T-cell (primary cell): ENCODE measurements at regions of chr1 and their contacts with region 1.

Region 1: GRCh38 chr1:2194898-2195673 is 514 bp upstream of the FAAP20 start:
- DNase-seq: peak; percentile 76 to 94 (median 85)
- ATAC-seq: peak; percentile 80 to 84 (median 82)
- H3K4me3 ChIP-seq: peak overlapping the region; percentile 57 to 61
- H3K4me3 Mint-ChIP-seq: peak overlapping the region; percentile 79 to 82 (median 81)
- H3K27ac ChIP-seq: peak overlapping the region; percentile 87
- H3K27ac Mint-ChIP-seq: peak overlapping the region; percentile 86 to 91
- H3K4me1 ChIP-seq: peaks cover 13 to 77% of the 10 kb centered on the region in 2 experiments
- H3K4me1 Mint-ChIP-seq: peaks cover 28 to 39% (median 38%) of the 10 kb centered on the region in 3 donors
- H3K27me3 ChIP-seq: no peaks in the 10 kb centered on the region
- H3K27me3 Mint-ChIP-seq: no peaks in the 10 kb centered on the region

Region 2: DNA sequence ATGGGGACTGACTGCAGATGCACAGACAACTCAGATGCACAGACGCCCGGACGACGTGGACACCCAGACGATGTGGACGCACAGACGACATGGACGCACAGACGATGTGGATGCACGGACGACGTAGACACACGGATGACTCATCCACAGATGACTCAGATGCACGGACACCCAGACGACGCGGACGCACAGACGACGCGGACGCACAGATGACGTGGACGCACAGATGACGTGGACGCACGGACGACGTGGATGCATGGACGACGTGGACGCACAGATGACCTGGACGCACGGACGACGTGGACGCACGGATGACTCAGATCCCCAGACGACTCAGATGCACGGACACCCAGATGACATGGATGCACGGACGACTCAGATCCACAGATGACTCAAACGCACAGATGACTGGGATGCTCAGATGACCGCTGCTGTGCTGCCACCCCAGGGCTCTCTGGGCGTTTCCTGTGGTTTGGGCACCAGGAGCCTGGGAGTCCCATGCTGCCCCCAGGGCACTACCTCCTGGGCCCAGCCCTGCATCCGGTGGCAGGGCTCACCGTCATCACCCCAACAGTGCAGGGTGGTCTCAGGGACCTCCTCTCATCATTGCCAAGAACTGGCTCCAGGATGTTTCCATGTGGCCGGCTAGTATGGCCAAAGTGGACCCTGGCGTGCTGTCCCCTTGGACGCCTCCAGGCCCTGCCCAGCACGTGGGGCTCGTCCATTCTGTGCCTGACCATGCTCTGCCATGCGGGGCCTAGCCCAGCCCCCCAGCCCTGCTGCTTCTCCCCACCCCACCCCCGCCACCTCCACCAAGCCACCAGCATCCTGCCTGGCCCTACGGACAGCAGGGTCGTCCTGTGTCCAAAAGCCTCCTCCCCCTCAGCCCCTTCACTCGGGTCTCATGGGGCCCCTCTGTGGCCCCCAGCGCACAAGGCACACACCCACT is 14.5 kb before region 1 on chr1:
- CTCF ChIA-PET with region 1: no interaction called
- POLR2A ChIA-PET with region 1: no interaction called
- DNase-seq: no peak
- ATAC-seq: no peak
- H3K4me3 ChIP-seq: no peak overlapping the region
- H3K4me3 Mint-ChIP-seq: no peak overlapping the region
- H3K27ac ChIP-seq: no peak overlapping the region
- H3K27ac Mint-ChIP-seq: no peak overlapping the region
- H3K4me1 ChIP-seq: no peaks in the 10 kb centered on the region
- H3K4me1 Mint-ChIP-seq: peaks cover 0 to 7% (median 1%) of the 10 kb centered on the region in 3 donors
- H3K27me3 ChIP-seq: peaks cover 0 to 1% of the 10 kb centered on the region in 2 experiments
- H3K27me3 Mint-ChIP-seq: no peaks in the 10 kb centered on the region

Region 3: GRCh38 chr1:2233997-2234761 is 39.1 kb after region 1 on chr1:
- CTCF ChIA-PET with region 1: interaction called in 1 of 2 experiments, 6 read pairs
- POLR2A ChIA-PET with region 1: interaction called, 4 to 11 read pairs
- DNase-seq: peak; percentile 58 to 88 (median 80)
- ATAC-seq: peak; percentile 52 to 75 (median 74)
- H3K4me3 ChIP-seq: peak overlapping the region; percentile 65 to 84
- H3K4me3 Mint-ChIP-seq: peak overlapping the region; percentile 84 to 96 (median 96)
- H3K27ac ChIP-seq: peak overlapping the region; percentile 73
- H3K27ac Mint-ChIP-seq: peak overlapping the region; percentile 98 to 99
- H3K4me1 ChIP-seq: peaks cover 48 to 100% of the 10 kb centered on the region in 2 experiments
- H3K4me1 Mint-ChIP-seq: peaks cover 70 to 83% (median 75%) of the 10 kb centered on the region in 3 donors
- H3K27me3 ChIP-seq: no peaks in the 10 kb centered on the region
- H3K27me3 Mint-ChIP-seq: no peaks in the 10 kb centered on the region

Region 4: DNA sequence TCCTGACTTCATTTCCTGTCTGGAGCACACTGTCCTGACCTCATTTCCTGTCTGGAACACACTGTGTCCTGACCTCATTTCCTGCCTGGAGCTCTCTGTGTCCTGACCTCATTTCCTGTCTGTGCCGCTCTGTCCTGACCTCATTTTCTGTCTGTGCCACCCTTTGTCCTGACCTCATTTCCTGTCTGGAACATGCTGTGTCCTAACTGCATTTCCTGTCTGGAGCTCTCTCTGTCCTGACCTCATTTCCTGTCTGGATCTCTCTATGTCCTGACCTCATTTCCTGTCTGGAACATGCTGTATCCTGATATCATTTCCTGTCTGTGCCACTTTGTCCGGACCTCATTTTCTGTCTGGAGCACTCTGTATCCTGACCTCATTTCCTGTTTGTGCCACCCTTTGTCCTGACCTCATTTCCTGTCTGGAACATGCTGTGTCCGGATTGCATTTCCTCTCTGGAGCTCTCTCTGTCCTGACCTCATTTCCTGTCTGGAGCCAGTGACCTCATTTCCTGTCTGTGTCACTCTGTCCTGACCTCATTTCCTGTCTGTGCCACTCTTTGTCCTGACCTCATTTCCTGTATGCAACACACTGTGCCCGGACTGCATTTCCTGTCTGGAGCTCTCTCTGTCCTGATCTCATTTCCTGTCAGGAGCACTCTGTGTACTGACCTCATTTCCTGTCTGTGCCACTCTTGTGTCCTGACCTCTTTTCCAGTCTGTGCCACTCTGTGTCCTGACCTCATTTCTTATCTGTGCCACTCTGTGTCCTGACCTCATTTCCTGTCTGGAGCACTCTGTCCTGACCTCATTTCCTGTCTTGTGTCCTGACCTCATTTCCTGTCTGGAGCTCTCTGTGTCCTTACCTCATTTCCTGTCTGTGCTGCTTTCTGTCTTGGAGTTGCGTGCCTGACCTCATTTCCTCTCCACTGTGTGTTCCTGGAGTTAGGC is 60.6 kb after region 1 on chr1:
- CTCF ChIA-PET with region 1: interaction called in 1 of 2 experiments, 11 read pairs
- POLR2A ChIA-PET with region 1: interaction called, 5 to 12 read pairs
- DNase-seq: peak; percentile 45 to 97 (median 87)
- ATAC-seq: peak; percentile 66 to 73 (median 66)
- H3K4me3 ChIP-seq: no peak overlapping the region
- H3K4me3 Mint-ChIP-seq: no peak overlapping the region
- H3K27ac ChIP-seq: peak overlapping the region; percentile 99
- H3K27ac Mint-ChIP-seq: no peak overlapping the region
- H3K4me1 ChIP-seq: peaks cover 29 to 93% of the 10 kb centered on the region in 2 experiments
- H3K4me1 Mint-ChIP-seq: peaks cover 56 to 60% (median 60%) of the 10 kb centered on the region in 3 donors
- H3K27me3 ChIP-seq: no peaks in the 10 kb centered on the region
- H3K27me3 Mint-ChIP-seq: no peaks in the 10 kb centered on the region

Region 5: GRCh38 chr1:2381741-2382620 is 186.9 kb after region 1 on chr1:
- CTCF ChIA-PET with region 1: interaction called, 20 to 32 read pairs
- POLR2A ChIA-PET with region 1: no interaction called
- DNase-seq: peak; percentile 43 to 85 (median 67)
- ATAC-seq: peak; percentile 92 to 97 (median 94)
- H3K4me3 ChIP-seq: no peak overlapping the region
- H3K4me3 Mint-ChIP-seq: no peak overlapping the region
- H3K27ac ChIP-seq: no peak overlapping the region
- H3K27ac Mint-ChIP-seq: no peak overlapping the region
- H3K4me1 ChIP-seq: peaks cover 4 to 14% of the 10 kb centered on the region in 2 experiments
- H3K4me1 Mint-ChIP-seq: peaks cover 0 to 2% (median 0%) of the 10 kb centered on the region in 3 donors
- H3K27me3 ChIP-seq: no peaks in the 10 kb centered on the region
- H3K27me3 Mint-ChIP-seq: no peaks in the 10 kb centered on the region

Region 6: GRCh38 chr1:2391041-2391930 is 196.2 kb after region 1 on chr1 and contains the starts of genes MORN1 and RER1:
- CTCF ChIA-PET with region 1: interaction called, 9 to 13 read pairs
- POLR2A ChIA-PET with region 1: interaction called in 1 of 2 experiments, 3 read pairs
- DNase-seq: peak; percentile 95 to 100 (median 99)
- ATAC-seq: peak; percentile 94 to 96 (median 95)
- H3K4me3 ChIP-seq: peak within 1 kb of the TSS; percentile 62 to 85
- H3K4me3 Mint-ChIP-seq: peak within 1 kb of the TSS; percentile 84 to 88 (median 85)
- H3K27ac ChIP-seq: peak within 1 kb of the TSS; percentile 45
- H3K27ac Mint-ChIP-seq: peak within 1 kb of the TSS; percentile 75 to 85
- H3K4me1 ChIP-seq: peaks cover 11 to 44% of the 10 kb centered on the region in 2 experiments
- H3K4me1 Mint-ChIP-seq: peaks cover 29 to 43% (median 37%) of the 10 kb centered on the region in 3 donors
- H3K27me3 ChIP-seq: no peaks in the 10 kb centered on the region
- H3K27me3 Mint-ChIP-seq: no peaks in the 10 kb centered on the region
- total RNA-seq, gene MORN1: 8.2 to 17.5 (median 13.2) TPM
- total RNA-seq, gene RER1: 84.3 to 129 (median 125) TPM